Activated T-helper 1 cell treated with anti-CD3 and anti-CD28 coated beads, Interleukin-12 subunit alpha, Interleukin-12 subunit beta, Interleukin-2, Interleukin-4 antibody, amounts not matched to agents 30 ng/mL and 10 ng/mL and 1 ng/mL, durations not matched to agents 14 hours and 24 hours and 36 hours (primary cell): ENCODE measurements at regions of chr12 and their contacts with region 1.

Region 1: DNA sequence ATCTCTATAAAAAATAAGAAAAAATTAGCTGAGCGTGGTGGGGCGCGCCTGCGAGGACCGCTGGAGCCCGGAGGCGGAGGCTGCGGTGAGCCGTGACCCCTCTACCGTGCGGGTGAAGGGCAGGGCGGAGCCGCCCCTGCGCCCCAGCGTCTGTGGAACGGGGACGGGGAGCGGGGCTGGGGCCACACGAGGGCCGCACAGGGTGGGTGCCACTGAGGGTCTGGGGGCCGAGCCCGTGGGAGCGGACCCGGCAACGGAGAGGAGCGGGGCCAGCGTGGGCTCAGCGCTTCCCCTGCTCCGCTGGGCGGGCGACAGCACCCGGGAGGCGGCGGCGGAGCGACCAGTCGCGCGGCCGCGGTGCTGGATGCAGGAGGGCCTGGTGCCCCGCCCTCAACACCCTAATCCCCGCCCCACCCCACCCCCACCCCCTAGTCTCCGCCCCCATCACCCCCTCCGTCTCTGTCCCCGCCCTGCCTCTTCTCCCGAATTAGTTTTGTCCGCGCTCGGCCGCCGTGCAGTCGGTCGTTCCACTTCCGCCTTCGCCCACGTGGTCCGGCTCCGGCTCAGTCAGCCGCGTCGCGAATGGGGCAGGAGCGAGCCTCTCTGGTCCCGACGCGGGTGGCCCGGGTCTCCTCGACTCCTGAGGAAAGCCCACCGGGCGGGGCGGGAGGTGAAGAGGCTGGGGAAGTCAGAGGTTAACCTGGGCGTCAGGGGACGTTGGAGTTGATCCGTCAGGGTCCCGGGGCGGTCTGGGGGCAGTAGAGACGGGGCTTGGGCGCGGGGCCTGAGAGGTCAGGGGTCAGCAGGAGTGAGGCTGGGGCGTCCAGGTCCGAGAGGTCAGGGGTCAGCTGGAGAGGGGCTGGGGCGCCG is at the start of gene PUS1:
- DNase-seq: peak; percentile 93
- H3K4me3 Mint-ChIP-seq: peak within 1 kb of the TSS; percentile 98
- H3K27ac Mint-ChIP-seq: peak within 1 kb of the TSS; percentile 95
- H3K4me1 Mint-ChIP-seq: peaks cover 13% of the 10 kb centered on the region
- H3K27me3 Mint-ChIP-seq: no peaks in the 10 kb centered on the region
- total RNA-seq, gene PUS1: 92.1 and 100.0 TPM in 2 replicates

Region 2: GRCh38 chr12:131710464-131711457 is 218.2 kb before region 1 on chr12 and contains the start of gene SFSWAP:
- intact Hi-C with region 1: loop called (anchors 1 kb)
- DNase-seq: peak; percentile 72
- H3K4me3 Mint-ChIP-seq: peak within 1 kb of the TSS; percentile 93
- H3K27ac Mint-ChIP-seq: peak within 1 kb of the TSS; percentile 92
- H3K4me1 Mint-ChIP-seq: peaks cover 26% of the 10 kb centered on the region
- H3K27me3 Mint-ChIP-seq: peaks cover 4% of the 10 kb centered on the region
- total RNA-seq, gene SFSWAP: 65.3 and 69.3 TPM in 2 replicates

Region 3: DNA sequence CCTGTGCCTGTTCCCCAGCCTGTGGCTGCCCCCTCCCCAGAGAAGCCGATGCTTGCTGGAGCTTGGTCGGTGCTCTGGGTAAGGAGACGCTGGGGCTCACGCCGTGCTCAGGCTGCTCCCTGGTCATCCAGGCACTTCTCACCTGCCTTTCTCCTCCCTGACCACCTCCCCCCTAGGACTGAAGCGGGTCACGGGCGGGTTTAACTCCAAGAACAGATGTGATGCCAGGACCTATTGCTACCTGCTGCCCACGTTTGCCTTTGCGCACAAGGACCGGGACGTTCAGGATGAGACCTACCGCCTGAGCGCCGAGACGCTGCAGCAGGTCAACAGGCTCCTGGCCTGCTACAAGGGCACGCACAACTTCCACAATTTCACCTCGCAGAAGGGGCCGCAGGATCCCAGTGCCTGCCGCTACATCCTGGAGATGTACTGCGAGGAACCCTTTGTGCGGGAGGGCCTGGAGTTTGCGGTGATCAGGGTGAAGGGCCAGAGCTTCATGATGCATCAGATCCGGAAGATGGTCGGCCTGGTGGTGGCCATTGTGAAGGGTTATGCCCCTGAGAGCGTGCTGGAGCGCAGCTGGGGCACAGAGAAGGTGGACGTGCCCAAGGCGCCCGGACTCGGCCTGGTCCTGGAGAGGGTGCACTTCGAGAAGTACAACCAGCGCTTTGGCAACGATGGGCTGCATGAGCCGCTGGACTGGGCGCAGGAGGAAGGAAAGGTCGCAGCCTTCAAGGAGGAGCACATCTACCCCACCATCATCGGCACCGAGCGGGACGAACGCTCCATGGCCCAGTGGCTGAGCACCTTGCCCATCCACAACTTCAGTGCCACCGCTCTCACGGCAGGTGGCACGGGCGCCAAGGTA is 12.4 kb after region 1 on chr12:
- intact Hi-C with region 1: no loop called
- DNase-seq: no peak
- H3K4me3 Mint-ChIP-seq: no peak overlapping the region
- H3K27ac Mint-ChIP-seq: no peak overlapping the region
- H3K4me1 Mint-ChIP-seq: no peaks in the 10 kb centered on the region
- H3K27me3 Mint-ChIP-seq: no peaks in the 10 kb centered on the region

Region 4: DNA sequence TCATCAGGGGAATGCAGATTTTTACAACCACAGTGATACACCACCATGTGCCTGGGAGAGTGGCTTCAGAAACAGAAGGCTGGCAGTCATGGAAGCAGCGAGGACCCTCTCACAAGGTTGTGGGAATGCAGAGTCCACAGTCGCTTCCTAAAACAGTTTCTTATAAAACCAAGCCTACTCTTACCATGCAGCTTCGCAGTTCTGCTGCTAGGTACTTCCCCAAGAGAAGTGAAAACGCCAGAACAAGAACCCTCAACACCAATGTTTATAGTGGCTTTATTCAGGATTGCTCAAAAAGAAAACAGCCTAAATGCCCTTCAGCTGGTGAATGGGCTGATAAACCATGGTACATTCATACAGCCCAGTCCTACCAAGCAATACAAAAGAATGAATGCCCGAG is 128.0 kb after region 1 on chr12:
- intact Hi-C with region 1: no loop called
- DNase-seq: no peak
- H3K4me3 Mint-ChIP-seq: no peak overlapping the region
- H3K27ac Mint-ChIP-seq: no peak overlapping the region
- H3K4me1 Mint-ChIP-seq: no peaks in the 10 kb centered on the region
- H3K27me3 Mint-ChIP-seq: no peaks in the 10 kb centered on the region